ENCODE measurements at regions of chr6 and their contacts with region 1.

Region 1: GRCh38 chr6:43334466-43335095 is 26.0 kb upstream of the CRIP3 start:
- DNase-seq: peak in 3 of 5 donors; percentile 16 to 84 (median 81)
- H3K4me3 ChIP-seq: no peak overlapping the region
- H3K27ac ChIP-seq: no peak overlapping the region
- H3K4me1 ChIP-seq: no peaks in the 10 kb centered on the region
- H3K27me3 ChIP-seq: no peaks in the 10 kb centered on the region
- CTCF ChIP-seq: peak; percentile 66

Region 2: DNA sequence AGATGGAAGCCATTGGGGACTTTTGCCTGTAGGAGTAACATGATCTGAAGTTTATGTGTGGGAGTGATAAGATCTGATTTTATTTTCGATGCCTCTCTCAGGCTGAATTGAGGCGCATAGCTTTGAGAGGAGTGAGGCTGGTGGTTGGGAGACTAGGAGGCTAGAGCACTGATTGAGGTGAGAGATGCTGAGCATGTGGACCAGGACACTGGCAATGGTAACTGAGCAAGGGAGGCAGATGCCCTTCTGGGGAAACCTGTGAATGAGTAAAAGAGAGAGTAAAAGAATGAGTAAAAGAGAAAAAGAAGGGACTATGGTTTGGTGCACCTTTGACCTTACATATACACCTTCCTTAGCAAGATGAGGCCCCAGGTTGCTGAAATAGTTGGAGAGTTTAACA is 310.1 kb before region 1 on chr6:
- intact Hi-C with region 1: no loop called
- DNase-seq: no peak
- H3K4me3 ChIP-seq: no peak overlapping the region
- H3K27ac ChIP-seq: no peak overlapping the region
- H3K4me1 ChIP-seq: peaks cover 0 to 6% (median 4%) of the 10 kb centered on the region in 3 donors
- H3K27me3 ChIP-seq: no peaks in the 10 kb centered on the region
- CTCF ChIP-seq: no peak

Region 3: GRCh38 chr6:43263314-43264178 is 71.0 kb before region 1 on chr6:
- intact Hi-C with region 1: loop called (anchors 10 kb)
- DNase-seq: peak in 4 of 5 donors; percentile 76 to 87 (median 83)
- H3K4me3 ChIP-seq: no peak overlapping the region
- H3K27ac ChIP-seq: no peak overlapping the region
- H3K4me1 ChIP-seq: peaks cover 0 to 8% (median 7%) of the 10 kb centered on the region in 3 donors
- H3K27me3 ChIP-seq: no peaks in the 10 kb centered on the region
- CTCF ChIP-seq: peak; percentile 84

Region 4: GRCh38 chr6:43402820-43403219 is 68.2 kb after region 1 on chr6:
- intact Hi-C with region 1: no loop called
- DNase-seq: no peak
- H3K4me3 ChIP-seq: no peak overlapping the region
- H3K27ac ChIP-seq: no peak overlapping the region
- H3K4me1 ChIP-seq: no peaks in the 10 kb centered on the region
- H3K27me3 ChIP-seq: no peaks in the 10 kb centered on the region
- CTCF ChIP-seq: no peak

Measured in kidney (tissue), 22 donors.